ENCODE measurements at regions of chr2 and their contacts with region 1.

Region 1: DNA sequence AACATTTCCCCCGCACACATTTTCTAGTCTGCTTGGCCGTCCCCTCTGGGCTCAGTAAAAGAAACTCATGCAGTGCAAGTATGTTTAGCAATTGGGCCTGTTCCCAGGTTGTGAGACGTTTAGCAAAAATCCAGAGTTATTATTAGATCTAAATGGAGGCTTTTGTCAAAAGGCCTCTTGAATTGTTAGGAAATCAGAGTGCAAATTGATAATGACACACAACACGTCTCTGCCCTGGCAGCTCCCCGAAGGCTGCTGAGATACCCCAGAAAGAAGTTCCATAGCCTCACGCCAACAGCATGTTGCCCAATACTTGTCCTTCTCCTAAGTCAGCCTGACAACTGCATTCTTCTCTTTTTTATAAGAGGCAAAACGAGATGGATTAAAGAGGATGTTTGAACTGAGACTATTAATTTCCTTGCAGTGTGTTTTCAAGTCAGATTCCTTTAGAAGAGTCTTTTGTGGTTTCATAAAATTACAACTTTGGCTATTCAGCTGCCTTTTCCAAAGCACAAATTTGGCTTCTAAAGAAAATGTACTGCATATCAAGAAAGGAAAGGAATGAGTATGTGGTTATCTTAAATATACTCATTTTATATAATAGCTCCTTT is 202.2 kb downstream of the TRIB2 start:
- DNase-seq: peak in 6 of 7 donors; percentile 39 to 84 (median 56)
- H3K4me3 ChIP-seq: no peak overlapping the region
- H3K27ac ChIP-seq: peak overlapping the region in 2 of 5 donors; percentile 39 to 83
- H3K4me1 ChIP-seq: peaks cover 0 to 7% of the 10 kb centered on the region in 2 donors
- H3K27me3 ChIP-seq: no peaks in the 10 kb centered on the region
- CTCF ChIP-seq: no peak
- POLR2A ChIP-seq: no peak

Region 2: GRCh38 chr2:12665334-12665733 is 253.6 kb before region 1 on chr2:
- intact Hi-C with region 1: no loop called
- DNase-seq: no peak
- H3K4me3 ChIP-seq: no peak overlapping the region
- H3K27ac ChIP-seq: peak overlapping the region in 1 of 5 donors; percentile 27
- H3K4me1 ChIP-seq: peaks cover 6 to 11% of the 10 kb centered on the region in 2 donors
- H3K27me3 ChIP-seq: no peaks in the 10 kb centered on the region
- CTCF ChIP-seq: no peak
- POLR2A ChIP-seq: no peak

Region 3: GRCh38 chr2:12824351-12824777 is 94.6 kb before region 1 on chr2:
- intact Hi-C with region 1: loop called in 1 of 2 experiments (anchors 10 kb)
- DNase-seq: peak in 4 of 7 donors; percentile 28 to 55 (median 38)
- H3K4me3 ChIP-seq: no peak overlapping the region
- H3K27ac ChIP-seq: peak overlapping the region in 3 of 5 donors; percentile 22 to 78 (median 43)
- H3K4me1 ChIP-seq: peaks cover 5 to 10% of the 10 kb centered on the region in 2 donors
- H3K27me3 ChIP-seq: no peaks in the 10 kb centered on the region
- CTCF ChIP-seq: no peak
- POLR2A ChIP-seq: no peak

Measured in adrenal gland (tissue), 19 donors.